Posterior cingulate gyrus (tissue), 11 donors: ENCODE measurements at regions of chr1 and their contacts with region 1.

Region 1: DNA sequence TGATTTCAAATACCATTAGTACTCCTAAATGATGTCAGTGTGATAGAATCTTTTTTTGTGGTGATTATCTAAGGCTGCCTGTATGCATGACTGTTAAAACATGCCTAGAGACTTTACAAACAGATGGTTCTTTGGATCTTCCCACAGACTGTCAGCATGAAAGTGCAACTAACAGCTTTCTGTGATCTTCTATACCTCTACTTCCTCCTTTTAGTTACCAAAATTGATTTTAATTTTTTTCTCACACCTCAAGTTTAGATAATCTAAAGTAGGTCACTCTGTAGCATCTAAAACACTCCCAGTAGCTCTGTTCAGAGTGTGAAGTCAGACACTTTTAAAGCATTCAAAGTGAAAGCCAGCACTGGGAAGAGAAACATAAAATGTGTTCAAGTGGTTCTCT is 534.5 kb downstream of the PTPRC start:
- DNase-seq: no peak

Region 2: GRCh38 chr1:199002661-199003060 is 170.7 kb before region 1 on chr1:
- intact Hi-C with region 1: loop called (anchors 5 kb)
- DNase-seq: no peak

Region 3: DNA sequence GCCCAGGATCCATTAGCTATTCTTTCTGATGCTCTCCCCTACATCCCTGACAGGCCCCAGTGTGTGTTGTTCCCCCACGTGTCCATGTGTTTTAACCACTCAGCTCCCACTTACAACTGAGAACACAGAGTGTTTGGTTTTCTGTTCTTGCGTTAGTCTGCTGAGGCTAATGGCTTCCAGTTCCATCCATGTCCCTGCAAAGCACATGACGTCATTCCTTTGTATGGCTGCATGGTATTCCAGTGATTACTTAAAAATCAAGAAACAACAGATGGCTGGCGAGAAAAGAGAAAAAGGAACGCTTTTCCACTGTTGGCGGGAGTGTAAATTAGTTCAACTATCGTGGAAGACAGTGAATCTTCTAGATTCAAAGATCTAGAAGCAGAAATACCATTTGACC is 21.5 kb after region 1 on chr1:
- intact Hi-C with region 1: no loop called
- DNase-seq: no peak

Region 4: GRCh38 chr1:200090252-200091096 is 917.1 kb after region 1 on chr1:
- intact Hi-C with region 1: no loop called
- DNase-seq: no peak